Prostate gland (tissue), 2 donors: ENCODE measurements at regions of chr4 and their contacts with region 1.

Region 1: DNA sequence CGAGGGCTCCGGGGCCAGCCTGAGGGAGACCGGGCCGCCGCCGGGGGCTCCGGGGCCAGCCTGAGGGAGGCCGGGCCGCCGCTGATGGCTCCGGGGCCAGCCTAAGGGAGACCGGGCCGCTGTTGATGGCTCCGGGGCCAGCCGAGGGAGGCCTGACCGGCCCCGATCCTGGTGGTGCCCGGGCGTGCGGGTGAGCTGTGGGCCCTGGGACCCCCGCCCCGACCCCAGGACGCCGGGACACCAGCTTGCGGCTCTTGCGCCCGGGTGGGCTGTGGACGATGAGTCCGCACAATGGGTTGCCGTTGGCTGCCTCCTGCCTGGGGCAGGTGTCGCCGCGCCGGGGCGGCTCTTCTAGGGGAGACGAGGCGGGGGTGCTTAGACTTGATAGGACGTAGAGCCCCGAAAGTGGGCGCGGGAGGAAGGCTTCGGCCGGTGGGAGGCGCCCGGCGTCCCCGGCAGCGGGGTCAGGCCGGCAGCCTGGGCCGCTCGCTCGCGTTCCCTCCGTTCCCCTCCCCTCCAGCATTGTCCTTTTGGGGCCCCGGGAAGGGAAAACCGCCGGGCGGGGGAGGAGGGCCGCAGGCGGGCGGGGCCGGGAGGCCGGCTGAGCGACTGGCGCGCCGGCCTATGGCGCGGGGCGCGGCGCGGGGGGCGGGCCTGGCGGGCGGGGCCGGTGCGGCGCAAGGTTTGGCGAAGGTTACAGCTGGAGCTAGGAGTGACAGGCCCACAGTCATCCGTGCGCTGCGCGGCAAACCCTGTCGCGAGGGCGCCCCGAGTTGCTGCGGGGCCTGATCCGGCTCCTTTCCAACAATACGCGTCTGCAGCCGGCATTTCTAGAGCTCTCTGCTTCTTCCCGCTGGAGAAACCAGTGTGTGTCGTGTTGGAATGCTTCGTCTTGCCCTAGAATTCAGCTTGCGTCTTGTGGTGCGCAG is 790 bp downstream of the KIAA0232 start:
- DNase-seq: peak; percentile 91
- H3K4me3 ChIP-seq: peak overlapping the region; percentile 87 to 98
- H3K27ac ChIP-seq: peak overlapping the region; percentile 100
- H3K4me1 ChIP-seq: peaks cover 29% of the 10 kb centered on the region
- H3K27me3 ChIP-seq: no peaks in the 10 kb centered on the region
- CTCF ChIP-seq: no peak
- POLR2A ChIP-seq: peak; percentile 87

Region 2: GRCh38 chr4:6716018-6716911 is 67.1 kb before region 1 on chr4 and contains the start of gene BLOC1S4:
- intact Hi-C with region 1: loop called (anchors 5 kb)
- DNase-seq: peak; percentile 80
- H3K4me3 ChIP-seq: peak within 1 kb of the TSS; percentile 78 to 92
- H3K27ac ChIP-seq: peak within 1 kb of the TSS; percentile 91 to 94
- H3K4me1 ChIP-seq: no peaks in the 10 kb centered on the region
- H3K27me3 ChIP-seq: no peaks in the 10 kb centered on the region
- CTCF ChIP-seq: peak in 2 of 4 experiments; percentile 37 to 47
- POLR2A ChIP-seq: peak; percentile 79
- total RNA-seq, gene BLOC1S4: 20.4 to 35.2 TPM

Region 3: DNA sequence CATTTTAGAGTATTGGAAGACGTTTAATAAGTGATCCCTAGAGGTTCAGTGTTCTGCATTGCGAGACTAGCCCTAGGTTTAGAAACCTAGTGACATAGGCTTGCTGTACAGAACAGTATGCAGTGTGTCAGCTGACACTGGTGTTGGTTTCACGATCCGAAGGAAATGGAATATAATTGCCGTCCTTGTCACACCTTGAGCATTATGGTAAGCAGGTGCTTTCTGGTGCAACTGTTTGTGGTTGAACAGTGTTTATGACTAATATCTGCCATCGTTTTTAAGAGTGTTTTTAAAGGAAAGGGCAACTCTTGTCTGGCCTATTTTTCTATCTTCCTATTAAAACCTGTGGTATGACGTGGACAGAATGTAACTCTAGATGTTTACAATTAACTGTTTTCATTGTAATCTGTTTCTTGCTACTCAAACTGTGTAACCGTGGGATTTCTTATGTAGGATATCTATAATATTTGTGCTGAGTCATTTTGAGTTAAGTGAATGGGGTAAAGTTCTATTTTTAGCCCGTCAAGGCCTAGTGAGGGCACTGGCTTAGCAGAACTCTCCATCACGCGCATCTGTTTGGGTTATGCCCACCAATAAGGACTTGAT is 72.5 kb after region 1 on chr4:
- intact Hi-C with region 1: loop called (anchors 5 kb)
- DNase-seq: no peak
- H3K4me3 ChIP-seq: no peak overlapping the region
- H3K27ac ChIP-seq: peak overlapping the region; percentile 8 to 72
- H3K4me1 ChIP-seq: no peaks in the 10 kb centered on the region
- H3K27me3 ChIP-seq: no peaks in the 10 kb centered on the region
- CTCF ChIP-seq: no peak
- POLR2A ChIP-seq: no peak

Region 4: GRCh38 chr4:6873792-6874461 is 90.6 kb after region 1 on chr4:
- intact Hi-C with region 1: loop called (anchors 5 kb)
- DNase-seq: peak; percentile 69
- H3K4me3 ChIP-seq: no peak overlapping the region
- H3K27ac ChIP-seq: no peak overlapping the region
- H3K4me1 ChIP-seq: no peaks in the 10 kb centered on the region
- H3K27me3 ChIP-seq: no peaks in the 10 kb centered on the region
- CTCF ChIP-seq: peak; percentile 72 to 89 (median 86)
- POLR2A ChIP-seq: no peak

Region 5: DNA sequence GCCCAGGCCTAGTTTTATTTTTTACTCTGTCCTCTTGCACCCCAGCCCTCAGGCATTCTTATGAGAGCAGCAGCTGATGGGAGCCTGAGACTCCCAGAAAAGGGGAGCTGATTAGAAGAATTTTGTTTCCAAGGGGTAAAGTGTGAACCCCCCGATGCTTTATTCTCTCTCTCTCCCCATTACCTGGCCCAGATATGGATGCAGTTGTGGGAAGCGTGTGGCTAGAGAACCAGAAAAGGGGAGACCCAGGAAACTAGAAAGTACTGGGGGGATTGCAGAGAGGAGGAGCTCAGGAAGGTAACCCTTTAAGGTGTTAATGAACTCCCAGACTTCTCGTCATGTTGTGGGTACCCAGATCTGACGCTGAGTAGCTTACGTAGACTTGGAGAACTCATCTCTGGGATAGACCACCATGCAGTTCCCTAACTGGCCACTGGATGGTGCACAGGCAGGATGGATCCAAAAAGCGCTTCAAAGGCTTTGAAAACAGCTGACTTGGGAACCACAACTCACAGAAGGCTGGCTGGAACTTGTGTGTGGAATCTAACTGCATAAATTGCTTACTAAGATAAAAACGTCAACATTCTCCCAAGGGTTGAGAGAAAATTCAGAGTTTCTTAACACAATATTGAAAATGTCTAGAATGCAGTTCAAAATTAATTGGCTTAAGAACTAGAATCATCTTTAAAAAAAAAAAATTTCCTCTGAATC is 191.0 kb after region 1 on chr4:
- intact Hi-C with region 1: no loop called
- DNase-seq: peak; percentile 74
- H3K4me3 ChIP-seq: no peak overlapping the region
- H3K27ac ChIP-seq: no peak overlapping the region
- H3K4me1 ChIP-seq: no peaks in the 10 kb centered on the region
- H3K27me3 ChIP-seq: no peaks in the 10 kb centered on the region
- CTCF ChIP-seq: peak; percentile 91 to 96 (median 94)
- POLR2A ChIP-seq: no peak

Region 6: GRCh38 chr4:6986781-6987587 is 203.7 kb after region 1 on chr4:
- intact Hi-C with region 1: loop called (anchors 5 kb)
- DNase-seq: peak; percentile 96
- H3K4me3 ChIP-seq: peak overlapping the region; percentile 54 to 74
- H3K27ac ChIP-seq: peak overlapping the region; percentile 93 to 96
- H3K4me1 ChIP-seq: peaks cover 15% of the 10 kb centered on the region
- H3K27me3 ChIP-seq: no peaks in the 10 kb centered on the region
- CTCF ChIP-seq: peak in 1 of 4 experiments; percentile 28
- POLR2A ChIP-seq: peak; percentile 68

Region 7: GRCh38 chr4:7042697-7043464 is 259.6 kb after region 1 on chr4 and contains the start of gene TADA2B:
- intact Hi-C with region 1: loop called (anchors 10 kb)
- DNase-seq: peak; percentile 97
- H3K4me3 ChIP-seq: peak within 1 kb of the TSS; percentile 82 to 95
- H3K27ac ChIP-seq: peak within 1 kb of the TSS; percentile 86 to 91
- H3K4me1 ChIP-seq: peaks cover 28% of the 10 kb centered on the region
- H3K27me3 ChIP-seq: no peaks in the 10 kb centered on the region
- CTCF ChIP-seq: peak; percentile 24 to 90 (median 63)
- POLR2A ChIP-seq: peak; percentile 49
- total RNA-seq, gene TADA2B: 34.5 to 41.2 TPM

Region 8: GRCh38 chr4:7081891-7082471 is 298.7 kb after region 1 on chr4:
- intact Hi-C with region 1: no loop called
- DNase-seq: peak; percentile 75
- H3K4me3 ChIP-seq: no peak overlapping the region
- H3K27ac ChIP-seq: no peak overlapping the region
- H3K4me1 ChIP-seq: no peaks in the 10 kb centered on the region
- H3K27me3 ChIP-seq: no peaks in the 10 kb centered on the region
- CTCF ChIP-seq: peak in 3 of 4 experiments; percentile 31 to 56 (median 55)
- POLR2A ChIP-seq: no peak

Region 9: DNA sequence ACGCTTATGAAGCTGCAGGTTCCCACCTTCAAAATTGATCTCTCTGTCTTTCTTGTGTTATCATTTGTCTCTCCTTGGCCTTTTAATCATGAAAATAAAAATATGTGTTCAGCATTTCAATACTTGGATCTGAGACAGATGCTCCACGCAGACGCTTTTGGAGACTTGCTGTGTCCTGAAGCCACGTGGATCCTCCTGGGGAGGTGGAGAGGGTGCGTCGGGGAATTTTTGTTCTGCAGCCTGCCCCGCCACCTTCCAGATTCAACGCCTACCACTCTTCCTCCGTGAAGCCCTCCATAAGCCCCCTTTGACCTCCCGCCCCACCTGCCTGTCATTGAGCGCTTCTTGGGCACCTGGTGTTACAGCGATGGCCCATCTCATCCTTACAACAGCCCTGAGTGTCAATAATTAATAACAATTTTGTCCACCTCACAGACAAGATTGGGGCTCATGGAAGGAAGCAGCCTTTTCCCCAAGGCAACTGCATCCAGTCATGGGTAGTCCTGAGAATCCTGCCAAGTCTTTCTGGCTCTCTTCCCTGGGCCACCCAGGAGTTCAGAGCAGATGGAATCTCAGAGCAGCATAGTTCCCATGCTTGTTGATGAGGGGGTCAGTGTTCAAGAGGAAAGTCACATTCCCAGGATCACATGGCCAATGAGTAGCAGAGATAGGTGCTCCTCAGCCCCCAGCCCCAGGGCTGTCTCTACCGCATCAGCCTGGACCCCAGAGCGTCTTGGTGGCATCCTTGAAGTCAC is 824.0 kb after region 1 on chr4:
- intact Hi-C with region 1: no loop called
- DNase-seq: no peak
- H3K4me3 ChIP-seq: no peak overlapping the region
- H3K27ac ChIP-seq: no peak overlapping the region
- H3K4me1 ChIP-seq: no peaks in the 10 kb centered on the region
- H3K27me3 ChIP-seq: no peaks in the 10 kb centered on the region
- CTCF ChIP-seq: no peak
- POLR2A ChIP-seq: no peak